ENCODE measurements at regions of chr14 and their contacts with region 1.

Region 1: DNA sequence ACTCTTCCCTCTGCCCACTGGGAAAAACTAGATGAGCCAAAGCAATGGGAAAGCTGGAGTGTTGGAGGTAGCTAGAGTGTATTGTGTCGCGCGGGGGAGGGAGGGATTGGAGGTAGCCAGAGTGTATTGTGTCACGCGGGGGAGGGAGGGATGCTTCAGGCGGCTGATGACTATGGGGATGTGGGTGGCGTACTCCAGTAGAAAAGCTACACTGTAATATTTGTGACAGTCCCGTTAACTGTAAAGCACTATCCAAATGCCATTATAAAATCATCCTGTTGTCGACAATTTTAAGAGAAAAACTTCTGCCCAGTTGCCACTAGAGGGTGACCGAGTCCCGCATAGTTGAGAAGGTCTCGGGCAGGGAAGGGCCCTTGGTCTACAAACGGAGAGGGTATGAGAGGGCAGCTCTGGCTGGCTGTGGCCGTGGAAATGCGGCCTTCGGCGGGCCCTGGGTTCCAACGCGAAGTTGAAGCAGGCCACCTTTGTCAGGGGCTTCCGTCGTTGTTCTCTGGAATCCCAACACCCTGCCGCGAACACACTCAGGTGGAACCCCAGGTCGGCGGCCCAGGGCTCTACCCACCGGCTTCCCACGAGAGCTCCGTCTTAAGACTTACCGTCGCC is 15.1 kb upstream of the PLEK2 start:
- DNase-seq: peak; percentile 71
- ATAC-seq: peak; percentile 91
- H3K4me3 ChIP-seq: no peak overlapping the region
- H3K27ac ChIP-seq: no peak overlapping the region
- H3K4me1 ChIP-seq: peaks cover 5 to 25% of the 10 kb centered on the region in 2 experiments; a peak in 3 of 4 replicates
- H3K27me3 ChIP-seq: no peaks in the 10 kb centered on the region
- CTCF ChIP-seq: peak; percentile 75 to 88 (median 76)
- POLR2A ChIP-seq: no peak
- RAD21 ChIP-seq: peak; percentile 92

Region 2: GRCh38 chr14:67400434-67400833 is 26.7 kb before region 1 on chr14:
- CTCF ChIA-PET with region 1: no interaction called
- POLR2A ChIA-PET with region 1: no interaction called
- RAD21 ChIA-PET with region 1: no interaction called
- intact Hi-C with region 1: no loop called
- DNase-seq: no peak
- ATAC-seq: no peak
- H3K4me3 ChIP-seq: no peak overlapping the region
- H3K27ac ChIP-seq: no peak overlapping the region
- H3K4me1 ChIP-seq: peaks cover 0 to 8% of the 10 kb centered on the region in 2 experiments; a peak in 2 of 4 replicates
- H3K27me3 ChIP-seq: no peaks in the 10 kb centered on the region
- CTCF ChIP-seq: no peak
- POLR2A ChIP-seq: no peak
- RAD21 ChIP-seq: no peak

Region 3: GRCh38 chr14:67413801-67414769 is 13.0 kb before region 1 on chr14:
- CTCF ChIA-PET with region 1: interaction called, 19 read pairs
- POLR2A ChIA-PET with region 1: no interaction called
- RAD21 ChIA-PET with region 1: no interaction called
- intact Hi-C with region 1: no loop called
- DNase-seq: peak; percentile 88
- ATAC-seq: peak; percentile 74
- H3K4me3 ChIP-seq: peak overlapping the region; percentile 12 to 39; a peak in 3 of 4 replicates
- H3K27ac ChIP-seq: peak overlapping the region; percentile 56
- H3K4me1 ChIP-seq: peaks cover 42 to 57% of the 10 kb centered on the region in 2 experiments
- H3K27me3 ChIP-seq: no peaks in the 10 kb centered on the region
- CTCF ChIP-seq: no peak
- POLR2A ChIP-seq: no peak
- RAD21 ChIP-seq: no peak

Region 4: GRCh38 chr14:67467179-67468080 is 40.3 kb after region 1 on chr14:
- CTCF ChIA-PET with region 1: no interaction called
- POLR2A ChIA-PET with region 1: no interaction called
- RAD21 ChIA-PET with region 1: no interaction called
- intact Hi-C with region 1: no loop called
- DNase-seq: no peak
- ATAC-seq: peak; percentile 69
- H3K4me3 ChIP-seq: no peak overlapping the region
- H3K27ac ChIP-seq: no peak overlapping the region
- H3K4me1 ChIP-seq: no peaks in the 10 kb centered on the region
- H3K27me3 ChIP-seq: no peaks in the 10 kb centered on the region
- CTCF ChIP-seq: peak in 2 of 3 experiments; percentile 32 to 55; a peak in 3 of 6 replicates
- POLR2A ChIP-seq: no peak
- RAD21 ChIP-seq: no peak

Region 5: GRCh38 chr14:67526676-67527459 is 99.8 kb after region 1 on chr14:
- CTCF ChIA-PET with region 1: interaction called, 10 read pairs
- POLR2A ChIA-PET with region 1: no interaction called
- RAD21 ChIA-PET with region 1: interaction called in 1 of 2 experiments, 4 read pairs
- intact Hi-C with region 1: loop called (anchors 5 kb)
- DNase-seq: peak; percentile 59
- ATAC-seq: peak; percentile 93
- H3K4me3 ChIP-seq: no peak overlapping the region
- H3K27ac ChIP-seq: no peak overlapping the region
- H3K4me1 ChIP-seq: peaks cover 0 to 11% of the 10 kb centered on the region in 2 experiments; a peak in 2 of 4 replicates
- H3K27me3 ChIP-seq: peaks cover 22% of the 10 kb centered on the region; the same call in 1 of the 2 replicates
- CTCF ChIP-seq: peak; percentile 81 to 98 (median 98)
- POLR2A ChIP-seq: no peak
- RAD21 ChIP-seq: peak; percentile 84

Region 6: GRCh38 chr14:67571272-67571850 is 144.3 kb after region 1 on chr14:
- CTCF ChIA-PET with region 1: interaction called, 78 read pairs
- POLR2A ChIA-PET with region 1: interaction called, 9 read pairs
- RAD21 ChIA-PET with region 1: interaction called, 18 to 29 read pairs
- intact Hi-C with region 1: loop called (anchors 1 kb)
- DNase-seq: peak; percentile 26
- ATAC-seq: peak; percentile 98
- H3K4me3 ChIP-seq: no peak overlapping the region
- H3K27ac ChIP-seq: no peak overlapping the region
- H3K4me1 ChIP-seq: peaks cover 0 to 4% of the 10 kb centered on the region in 2 experiments; a peak in 1 of 4 replicates
- H3K27me3 ChIP-seq: no peaks in the 10 kb centered on the region
- CTCF ChIP-seq: peak; percentile 86 to 96 (median 91)
- POLR2A ChIP-seq: no peak
- RAD21 ChIP-seq: peak; percentile 92

Region 7: DNA sequence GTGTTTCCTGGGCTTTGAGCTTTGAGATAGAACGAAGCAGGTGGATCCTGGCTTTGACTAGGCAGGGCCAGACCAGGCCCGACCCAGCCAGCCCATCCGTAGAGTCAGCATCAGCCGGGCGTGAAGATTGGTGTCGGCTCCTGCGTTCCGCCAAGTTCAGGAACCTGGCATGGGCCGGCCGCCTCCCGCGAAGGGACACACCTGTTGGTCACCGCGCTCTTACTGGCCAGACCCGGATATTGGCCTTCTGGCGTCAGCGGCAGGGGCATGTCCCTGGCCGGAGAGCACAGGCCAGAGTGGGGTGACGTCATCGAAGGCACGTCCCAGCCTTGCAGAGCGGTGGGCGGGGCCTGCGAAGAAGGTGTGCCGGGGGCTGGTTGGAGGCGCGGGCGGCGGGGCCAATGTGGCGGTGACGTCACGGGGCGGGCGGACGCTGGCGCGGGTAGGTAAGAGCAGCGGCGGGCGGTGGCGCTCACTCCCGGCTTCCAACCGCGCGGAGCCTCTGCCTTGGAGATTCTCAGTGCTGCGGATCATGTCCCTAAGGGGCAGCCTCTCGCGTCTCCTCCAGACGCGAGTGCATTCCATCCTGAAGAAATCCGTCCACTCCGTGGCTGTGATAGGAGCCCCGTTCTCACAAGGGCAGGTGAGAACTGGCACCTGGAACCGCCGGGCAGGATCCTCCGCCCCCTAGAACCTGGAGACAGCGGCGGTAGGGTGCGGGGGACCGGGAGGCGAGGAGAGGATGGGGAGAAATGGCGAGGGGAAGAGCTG is 192.5 kb after region 1 on chr14 and contains the start of gene ARG2:
- CTCF ChIA-PET with region 1: interaction called, 10 read pairs
- POLR2A ChIA-PET with region 1: no interaction called
- RAD21 ChIA-PET with region 1: no interaction called
- intact Hi-C with region 1: no loop called
- DNase-seq: peak; percentile 98
- ATAC-seq: peak; percentile 95
- H3K4me3 ChIP-seq: peak within 1 kb of the TSS; percentile 52 to 66
- H3K27ac ChIP-seq: no peak within 1 kb of the TSS
- H3K4me1 ChIP-seq: peaks cover 15 to 32% of the 10 kb centered on the region in 2 experiments
- H3K27me3 ChIP-seq: no peaks in the 10 kb centered on the region
- CTCF ChIP-seq: no peak
- POLR2A ChIP-seq: peak; percentile 46
- RAD21 ChIP-seq: 0 out of 2 replicates have a peak, but pooled peaks have one; percentile 34
- total RNA-seq, gene ARG2: 7.0 TPM

Region 8: DNA sequence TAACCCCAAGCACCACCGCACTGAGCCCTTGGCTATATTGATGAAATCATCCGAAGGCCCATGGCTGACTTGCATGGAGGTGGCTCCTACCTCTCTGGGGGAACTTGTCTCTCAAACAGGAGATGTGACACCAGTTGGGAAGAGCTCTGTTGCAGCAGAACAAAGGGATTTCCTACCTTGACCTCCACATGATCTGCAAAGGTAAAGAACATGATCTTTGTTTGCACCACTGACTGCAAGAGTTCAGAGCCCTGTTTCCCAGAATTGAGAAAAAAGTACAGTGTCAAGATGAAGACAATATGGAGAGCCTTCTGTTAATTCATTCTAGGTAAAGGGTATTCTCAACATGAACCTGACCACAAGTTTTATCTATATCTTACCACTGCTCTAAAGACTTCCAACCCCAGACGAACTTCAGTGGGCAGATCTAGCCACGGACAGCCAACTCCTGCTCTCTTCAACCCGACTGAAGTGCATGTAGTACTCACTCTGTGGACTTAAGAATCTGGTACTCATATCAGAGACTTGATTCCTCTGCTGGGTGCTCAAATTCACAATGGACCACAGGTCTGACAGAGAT is 357.2 kb after region 1 on chr14:
- CTCF ChIA-PET with region 1: no interaction called
- POLR2A ChIA-PET with region 1: no interaction called
- RAD21 ChIA-PET with region 1: no interaction called
- intact Hi-C with region 1: no loop called
- DNase-seq: no peak
- ATAC-seq: no peak
- H3K4me3 ChIP-seq: no peak overlapping the region
- H3K27ac ChIP-seq: no peak overlapping the region
- H3K4me1 ChIP-seq: no peaks in the 10 kb centered on the region
- H3K27me3 ChIP-seq: no peaks in the 10 kb centered on the region
- CTCF ChIP-seq: no peak
- POLR2A ChIP-seq: no peak
- RAD21 ChIP-seq: no peak